ENCODE measurements at regions of chr2 and their contacts with region 1.

Region 1: GRCh38 chr2:210663631-210664089 is 107.3 kb downstream of the CPS1 start:
- DNase-seq: no peak

Region 2: DNA sequence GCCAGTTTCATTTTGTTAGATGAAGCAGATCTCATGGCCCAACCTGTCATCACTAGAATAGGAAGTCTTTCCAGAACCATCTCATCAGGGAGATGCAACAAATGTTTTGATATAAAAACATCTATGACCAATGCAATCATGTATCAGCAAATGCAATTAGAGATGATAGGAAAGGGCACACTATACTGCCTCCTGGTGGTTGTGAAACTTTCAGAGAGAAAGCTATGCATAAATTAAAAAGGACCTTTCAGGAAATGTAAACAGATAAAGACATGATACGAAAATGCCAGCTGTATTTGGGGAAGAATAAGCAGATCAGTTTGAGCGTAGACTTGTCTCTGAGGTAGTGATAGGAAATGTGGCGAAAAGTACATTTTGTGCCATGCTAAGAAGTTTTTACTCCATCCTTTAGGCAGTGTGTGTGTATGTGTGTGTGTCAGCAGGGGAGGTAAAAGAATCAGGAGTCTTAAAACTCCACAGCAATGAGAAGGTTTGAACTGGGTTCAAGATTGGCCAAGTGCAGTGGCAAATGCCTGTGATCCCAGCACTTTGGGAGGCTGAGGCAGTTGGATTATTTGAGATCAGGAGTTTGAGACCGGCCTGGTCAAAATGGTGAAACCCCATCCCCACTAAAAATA is 372.0 kb after region 1 on chr2:
- intact Hi-C with region 1: loop called (anchors 5 kb)
- DNase-seq: no peak

Measured in cardiac septum (tissue), 1 donor.